ENCODE measurements at regions of chr1 and their contacts with region 1.

Region 1: DNA sequence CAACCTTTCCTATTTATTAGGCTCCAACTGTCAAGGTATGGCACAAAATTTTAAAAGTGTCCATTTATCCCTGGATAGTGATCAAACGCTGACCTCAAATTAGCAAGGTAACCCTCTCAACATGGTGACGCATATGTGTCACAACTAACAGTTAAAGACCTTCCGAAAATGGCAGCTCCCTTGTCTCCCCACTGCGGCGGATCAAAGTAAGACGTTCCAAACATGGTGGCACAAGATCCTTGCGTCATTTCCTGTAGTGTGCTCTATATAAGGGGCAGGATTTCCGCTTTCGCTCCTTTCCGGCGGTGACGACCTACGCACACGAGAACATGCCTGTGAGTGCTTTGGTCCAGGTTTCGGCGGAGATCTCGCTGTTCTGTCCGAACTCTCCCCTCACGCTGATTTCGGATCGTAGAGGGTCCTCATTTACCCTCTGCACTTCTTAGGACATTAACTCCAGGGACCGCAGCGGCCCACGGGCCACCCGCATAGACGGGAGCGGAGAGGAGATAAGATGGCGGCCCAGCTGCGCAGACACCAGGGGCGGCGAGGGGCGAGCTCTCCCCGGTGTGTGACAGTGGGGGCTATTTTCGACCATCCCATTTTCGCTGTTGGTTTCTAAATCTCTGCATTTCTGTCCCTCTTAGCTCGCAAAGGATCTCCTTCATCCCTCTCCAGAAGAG is at the start of gene RPS27:
- DNase-seq: peak; percentile 94 to 97
- H3K4me3 ChIP-seq: peak within 1 kb of the TSS; percentile 83
- H3K4me3 Mint-ChIP-seq: peak within 1 kb of the TSS; percentile 95
- H3K27ac Mint-ChIP-seq: peak within 1 kb of the TSS; percentile 99
- H3K4me1 ChIP-seq: peaks cover 9% of the 10 kb centered on the region; the same call in 1 of the 2 replicates
- H3K4me1 Mint-ChIP-seq: peaks cover 34% of the 10 kb centered on the region
- H3K27me3 ChIP-seq: no peaks in the 10 kb centered on the region
- H3K27me3 Mint-ChIP-seq: peaks cover 3% of the 10 kb centered on the region
- CTCF ChIP-seq: no peak
- total RNA-seq, gene RPS27: 2,648 and 2,676 TPM in 2 replicates

Region 2: GRCh38 chr1:153572569-153573015 is 418.0 kb before region 1 on chr1:
- CTCF ChIA-PET with region 1: no interaction called
- POLR2A ChIA-PET with region 1: no interaction called
- intact Hi-C with region 1: no loop called
- DNase-seq: peak; percentile 63 to 69
- H3K4me3 ChIP-seq: no peak overlapping the region
- H3K4me3 Mint-ChIP-seq: no peak overlapping the region
- H3K27ac Mint-ChIP-seq: peak overlapping the region; percentile 29
- H3K4me1 ChIP-seq: peaks cover 58% of the 10 kb centered on the region
- H3K4me1 Mint-ChIP-seq: peaks cover 65% of the 10 kb centered on the region
- H3K27me3 ChIP-seq: no peaks in the 10 kb centered on the region
- H3K27me3 Mint-ChIP-seq: no peaks in the 10 kb centered on the region
- CTCF ChIP-seq: peak in 1 of 2 experiments; percentile 70

Region 3: DNA sequence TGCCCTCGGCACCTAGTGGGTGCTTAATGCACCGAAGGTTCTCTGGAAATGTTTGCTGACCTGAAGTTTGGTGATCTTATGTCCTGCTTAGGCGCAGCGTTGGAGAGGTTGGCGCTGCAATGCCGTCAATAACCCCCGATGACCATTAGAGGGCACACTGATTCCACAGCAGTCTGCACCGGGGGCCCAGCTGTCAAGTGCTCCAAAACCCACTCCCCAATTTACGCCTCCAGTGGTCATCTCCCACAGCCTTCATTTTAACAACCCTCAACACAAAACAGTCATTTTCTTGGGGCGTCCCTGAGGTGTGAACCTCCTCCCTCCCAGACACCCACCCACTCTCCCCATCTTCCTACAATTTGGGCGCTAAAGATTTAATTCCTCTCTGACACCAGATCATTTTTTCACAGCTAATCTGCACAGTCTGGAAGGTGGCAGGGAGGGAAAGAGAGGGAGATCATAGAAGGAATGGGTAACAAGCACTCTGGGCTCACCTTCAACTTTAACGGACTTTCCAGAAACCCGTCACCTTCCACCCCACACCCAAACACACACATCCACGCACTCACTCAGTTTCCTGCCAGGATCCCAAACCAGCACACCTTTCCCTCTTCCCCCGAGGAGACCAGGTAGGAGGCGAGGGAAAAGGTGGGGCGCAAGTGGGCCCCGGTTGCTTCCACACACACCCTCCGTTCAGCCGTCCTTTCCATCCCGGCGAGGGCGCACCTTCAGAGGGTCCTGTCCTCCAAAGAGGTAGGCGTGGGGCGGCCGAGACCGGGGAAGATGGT is 312.7 kb before region 1 on chr1:
- CTCF ChIA-PET with region 1: interaction called, 5 read pairs
- POLR2A ChIA-PET with region 1: no interaction called
- intact Hi-C with region 1: loop called (anchors 1 kb)
- DNase-seq: peak; percentile 66 to 72
- H3K4me3 ChIP-seq: peak overlapping the region; percentile 73
- H3K4me3 Mint-ChIP-seq: peak overlapping the region; percentile 97
- H3K27ac Mint-ChIP-seq: peak overlapping the region; percentile 18
- H3K4me1 ChIP-seq: peaks cover 16% of the 10 kb centered on the region
- H3K4me1 Mint-ChIP-seq: peaks cover 28% of the 10 kb centered on the region
- H3K27me3 ChIP-seq: no peaks in the 10 kb centered on the region
- H3K27me3 Mint-ChIP-seq: peaks cover 9% of the 10 kb centered on the region
- CTCF ChIP-seq: peak; percentile 91 to 93

Region 4: GRCh38 chr1:153796791-153797659 is 193.6 kb before region 1 on chr1:
- CTCF ChIA-PET with region 1: no interaction called
- POLR2A ChIA-PET with region 1: no interaction called
- intact Hi-C with region 1: loop called (anchors 1 kb)
- DNase-seq: peak; percentile 80 to 82
- H3K4me3 ChIP-seq: no peak overlapping the region
- H3K4me3 Mint-ChIP-seq: no peak overlapping the region
- H3K27ac Mint-ChIP-seq: no peak overlapping the region
- H3K4me1 ChIP-seq: no peaks in the 10 kb centered on the region
- H3K4me1 Mint-ChIP-seq: no peaks in the 10 kb centered on the region
- H3K27me3 ChIP-seq: no peaks in the 10 kb centered on the region
- H3K27me3 Mint-ChIP-seq: no peaks in the 10 kb centered on the region
- CTCF ChIP-seq: peak; percentile 76 to 93

Region 5: DNA sequence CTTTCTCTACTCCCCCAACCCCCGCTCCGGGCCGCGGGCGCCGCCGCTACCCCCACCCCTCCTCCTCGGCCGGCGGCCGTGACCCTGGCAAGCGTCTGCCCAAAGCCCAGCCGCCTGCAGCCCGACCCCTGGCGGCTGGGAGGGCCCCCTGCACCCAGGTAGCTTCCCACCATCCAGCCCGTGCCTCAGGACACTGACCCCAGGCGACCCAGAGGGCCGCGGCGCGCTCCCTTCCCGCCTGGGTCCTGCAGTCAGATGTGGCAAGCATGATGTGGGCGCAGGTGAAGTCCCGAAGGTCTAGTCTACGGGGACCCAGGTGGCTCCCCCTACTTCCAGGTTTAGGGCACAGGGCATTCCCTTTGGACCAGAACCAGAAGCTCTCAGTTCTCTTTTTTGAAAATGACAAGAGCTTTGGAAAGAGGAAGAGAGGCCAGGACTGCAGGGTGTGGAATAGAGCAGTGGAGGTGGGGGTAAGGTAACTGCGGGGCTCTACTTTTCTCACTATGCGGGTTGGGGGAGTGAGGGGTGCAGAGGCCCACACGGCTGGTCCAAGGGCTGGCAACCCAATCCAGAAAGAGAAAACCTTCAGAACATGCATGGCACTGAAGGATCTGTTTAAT is 43.9 kb before region 1 on chr1 and contains the start of gene DENND4B:
- CTCF ChIA-PET with region 1: no interaction called
- POLR2A ChIA-PET with region 1: interaction called, 3 read pairs
- intact Hi-C with region 1: loop called (anchors 1 kb)
- DNase-seq: peak; percentile 85 to 92
- H3K4me3 ChIP-seq: peak within 1 kb of the TSS; percentile 92
- H3K4me3 Mint-ChIP-seq: peak within 1 kb of the TSS; percentile 82
- H3K27ac Mint-ChIP-seq: peak within 1 kb of the TSS; percentile 57
- H3K4me1 ChIP-seq: peaks cover 8% of the 10 kb centered on the region
- H3K4me1 Mint-ChIP-seq: peaks cover 7% of the 10 kb centered on the region
- H3K27me3 ChIP-seq: no peaks in the 10 kb centered on the region
- H3K27me3 Mint-ChIP-seq: no peaks in the 10 kb centered on the region
- CTCF ChIP-seq: peak; percentile 95 to 97
- total RNA-seq, gene DENND4B: 78.2 and 79.0 TPM in 2 replicates

Region 6: GRCh38 chr1:153977250-153978240 is 13.1 kb before region 1 on chr1 and contains the start of gene JTB:
- CTCF ChIA-PET with region 1: interaction called, 6 read pairs
- POLR2A ChIA-PET with region 1: interaction called, 26 read pairs
- intact Hi-C with region 1: loop called (anchors 1 kb)
- DNase-seq: peak; percentile 86
- H3K4me3 ChIP-seq: peak within 1 kb of the TSS; percentile 84
- H3K4me3 Mint-ChIP-seq: peak within 1 kb of the TSS; percentile 95
- H3K27ac Mint-ChIP-seq: peak within 1 kb of the TSS; percentile 92
- H3K4me1 ChIP-seq: peaks cover 8% of the 10 kb centered on the region
- H3K4me1 Mint-ChIP-seq: peaks cover 6% of the 10 kb centered on the region
- H3K27me3 ChIP-seq: no peaks in the 10 kb centered on the region
- H3K27me3 Mint-ChIP-seq: no peaks in the 10 kb centered on the region
- CTCF ChIP-seq: no peak
- total RNA-seq, gene JTB: 123 and 124 TPM in 2 replicates

Measured in Caco-2 (cell line).